Gastrocnemius medialis (tissue), 4 donors: ENCODE measurements at regions of chr9 and their contacts with region 1.

Region 1: GRCh38 chr9:83425240-83425639 is 113.0 kb downstream of the FRMD3 start:
- DNase-seq: no peak
- ATAC-seq: no peak
- H3K4me3 ChIP-seq: no peak overlapping the region
- H3K27ac ChIP-seq: no peak overlapping the region
- H3K4me1 ChIP-seq: peaks cover 7 to 8% of the 10 kb centered on the region in 2 donors
- H3K27me3 ChIP-seq: no peaks in the 10 kb centered on the region
- CTCF ChIP-seq: no peak
- POLR2A ChIP-seq: no peak

Region 2: DNA sequence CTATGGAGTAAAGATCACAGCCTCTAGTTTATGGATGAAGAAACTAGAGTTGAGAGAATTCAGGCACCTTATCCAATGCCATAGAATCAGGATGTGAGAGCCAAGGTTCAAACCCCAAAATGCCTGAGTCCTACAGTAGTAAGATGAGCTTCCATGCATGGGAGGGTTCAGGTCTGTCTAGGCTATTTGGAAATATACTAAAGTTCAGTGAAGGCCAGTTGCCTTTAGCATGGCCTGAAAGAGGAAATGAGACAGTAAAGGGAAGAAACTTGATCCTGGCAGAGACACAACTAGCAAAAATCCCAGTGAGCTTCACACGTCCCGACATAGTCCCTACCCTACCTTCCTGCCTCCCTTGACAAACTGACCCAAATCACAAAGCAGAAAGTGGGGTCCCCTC is 679.3 kb before region 1 on chr9:
- in situ Hi-C with region 1: no loop called
- intact Hi-C with region 1: no loop called
- DNase-seq: no peak
- ATAC-seq: no peak
- H3K4me3 ChIP-seq: no peak overlapping the region
- H3K27ac ChIP-seq: no peak overlapping the region
- H3K4me1 ChIP-seq: no peaks in the 10 kb centered on the region
- H3K27me3 ChIP-seq: no peaks in the 10 kb centered on the region
- CTCF ChIP-seq: no peak
- POLR2A ChIP-seq: no peak

Region 3: DNA sequence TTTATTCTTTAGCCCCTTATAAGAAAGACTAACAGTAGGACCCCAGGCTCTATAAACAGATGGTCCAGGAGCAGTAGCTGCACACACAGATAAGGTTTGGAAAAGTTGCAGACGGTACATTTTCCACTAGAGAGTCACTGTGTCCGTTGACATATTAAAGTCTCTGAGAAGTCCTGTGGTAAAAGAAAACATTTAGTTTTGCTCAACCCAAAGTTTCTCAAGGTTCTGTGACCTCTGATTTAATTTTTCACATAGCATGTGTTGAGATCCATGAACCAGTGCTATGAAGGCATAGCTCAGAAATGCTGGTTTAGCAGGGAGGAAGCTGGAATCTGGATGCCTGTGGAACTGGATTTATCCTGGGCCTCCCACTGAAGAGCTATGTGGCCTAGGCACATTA is 299.6 kb before region 1 on chr9:
- in situ Hi-C with region 1: no loop called
- intact Hi-C with region 1: no loop called
- DNase-seq: no peak
- ATAC-seq: no peak
- H3K4me3 ChIP-seq: no peak overlapping the region
- H3K27ac ChIP-seq: no peak overlapping the region
- H3K4me1 ChIP-seq: no peaks in the 10 kb centered on the region
- H3K27me3 ChIP-seq: no peaks in the 10 kb centered on the region
- CTCF ChIP-seq: no peak
- POLR2A ChIP-seq: no peak

Region 4: GRCh38 chr9:83466877-83467276 is 41.6 kb after region 1 on chr9:
- in situ Hi-C with region 1: no loop called
- intact Hi-C with region 1: loop called (anchors 1 kb)
- DNase-seq: no peak
- ATAC-seq: no peak
- H3K4me3 ChIP-seq: no peak overlapping the region
- H3K27ac ChIP-seq: peak overlapping the region in 3 of 4 donors; percentile 12 to 56 (median 38)
- H3K4me1 ChIP-seq: peaks cover 24 to 38% of the 10 kb centered on the region in 2 donors
- H3K27me3 ChIP-seq: no peaks in the 10 kb centered on the region
- CTCF ChIP-seq: no peak
- POLR2A ChIP-seq: no peak